Panc1 (cell line): ENCODE measurements at regions of chr16 and their contacts with region 1.

Region 1: DNA sequence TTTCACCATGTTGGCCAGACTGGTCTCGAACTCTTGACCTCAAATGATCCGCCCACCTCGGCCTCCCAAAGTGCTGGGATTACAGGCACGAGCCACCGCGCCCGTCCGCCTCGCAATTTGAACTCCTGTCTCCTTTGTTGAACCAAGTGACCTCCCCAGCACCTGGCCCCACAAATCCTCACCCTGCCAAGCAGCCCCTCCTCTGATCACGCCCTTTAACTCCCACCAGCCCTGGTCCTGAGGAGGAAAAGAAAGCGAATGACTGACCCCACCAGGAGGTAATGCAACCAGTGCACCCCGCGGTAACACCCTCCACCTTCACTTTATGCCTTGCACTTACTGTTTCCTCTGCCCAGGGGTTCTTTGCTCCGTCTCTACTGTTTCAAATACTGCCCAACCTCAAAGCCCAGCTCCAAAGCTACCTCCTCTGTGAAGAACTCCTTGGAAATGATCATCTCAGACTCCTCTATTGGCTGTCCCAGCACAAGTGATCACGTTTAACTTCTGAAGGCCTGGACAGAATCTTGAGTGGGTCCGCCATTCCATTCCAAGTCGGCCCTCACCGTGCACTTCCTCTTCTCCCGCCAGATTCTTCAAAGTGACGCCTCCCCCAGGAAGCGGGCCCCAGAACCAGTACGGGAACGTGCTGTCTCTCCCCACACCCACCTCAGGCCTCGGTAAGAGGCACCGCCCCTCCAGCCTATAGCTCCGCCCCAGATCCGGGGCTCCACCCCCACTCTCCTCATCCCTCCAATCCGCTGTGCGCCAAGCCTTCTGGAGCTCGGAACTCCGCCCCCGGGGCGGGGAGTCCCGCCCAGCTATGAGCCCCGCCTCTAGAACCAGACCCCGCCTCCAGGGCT is 4.4 kb downstream of the CD19 start:
- DNase-seq: no peak
- ATAC-seq: peak; percentile 85
- H3K4me3 ChIP-seq: peak overlapping the region in 1 of 2 experiments; percentile 23; a peak in 2 of 4 replicates
- H3K27ac ChIP-seq: no peak overlapping the region
- H3K4me1 ChIP-seq: no peaks in the 10 kb centered on the region
- H3K27me3 ChIP-seq: no peaks in the 10 kb centered on the region
- CTCF ChIP-seq: no peak

Region 2: DNA sequence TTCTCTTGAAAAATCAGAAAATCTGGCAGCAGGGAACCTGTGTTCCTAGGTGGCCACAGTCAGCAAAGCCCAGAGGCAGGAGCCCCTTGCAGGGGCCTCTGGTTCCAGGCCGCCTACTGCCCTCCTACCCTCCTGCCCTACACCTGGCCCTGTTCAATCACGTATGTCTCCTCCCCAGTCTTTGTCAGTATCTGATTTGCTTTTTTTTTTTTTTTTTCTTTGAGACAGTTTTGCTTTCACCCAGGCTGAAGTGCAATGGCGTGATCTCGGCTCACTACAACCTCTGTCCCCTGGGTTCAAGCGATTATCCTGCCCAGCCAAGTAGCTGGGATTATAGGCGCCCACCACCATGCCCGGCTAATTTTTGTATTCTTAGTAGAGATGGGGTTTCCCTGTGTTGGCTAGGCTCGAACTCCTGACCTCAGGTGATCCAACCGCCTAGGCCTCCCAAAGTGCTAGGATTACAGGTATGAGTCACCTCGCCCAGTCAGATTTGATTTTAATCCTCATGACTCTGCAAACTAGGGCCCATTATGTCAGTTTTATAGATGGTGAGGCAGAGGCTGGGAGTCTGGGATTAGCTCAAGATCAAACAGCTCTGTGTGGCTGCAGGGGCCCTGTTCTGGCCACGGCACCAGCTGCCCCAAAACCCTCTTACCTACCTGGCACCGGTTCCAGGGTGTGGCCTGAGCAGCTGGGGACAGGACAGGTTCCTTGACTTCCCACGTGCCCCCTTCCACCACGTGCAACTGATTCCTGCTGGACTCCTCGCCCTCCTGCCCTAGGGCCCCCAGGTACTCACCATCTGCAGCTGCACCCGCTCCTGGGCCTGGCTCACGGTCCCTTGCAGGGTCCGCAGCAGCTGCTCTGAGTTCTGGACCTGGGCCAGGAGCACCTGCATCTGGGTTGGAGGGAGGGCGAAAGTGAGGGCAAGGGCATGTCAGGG is 25.8 kb before region 1 on chr16:
- CTCF ChIA-PET with region 1: no interaction called
- POLR2A ChIA-PET with region 1: interaction called, 14 read pairs
- in situ Hi-C with region 1: no loop called
- intact Hi-C with region 1: no loop called
- DNase-seq: no peak
- ATAC-seq: peak; percentile 37; the same call in 1 of the 2 replicates
- H3K4me3 ChIP-seq: no peak overlapping the region
- H3K27ac ChIP-seq: no peak overlapping the region
- H3K4me1 ChIP-seq: no peaks in the 10 kb centered on the region
- H3K27me3 ChIP-seq: no peaks in the 10 kb centered on the region
- CTCF ChIP-seq: no peak